ENCODE measurements at regions of chr15 and their contacts with region 1.

Region 1: DNA sequence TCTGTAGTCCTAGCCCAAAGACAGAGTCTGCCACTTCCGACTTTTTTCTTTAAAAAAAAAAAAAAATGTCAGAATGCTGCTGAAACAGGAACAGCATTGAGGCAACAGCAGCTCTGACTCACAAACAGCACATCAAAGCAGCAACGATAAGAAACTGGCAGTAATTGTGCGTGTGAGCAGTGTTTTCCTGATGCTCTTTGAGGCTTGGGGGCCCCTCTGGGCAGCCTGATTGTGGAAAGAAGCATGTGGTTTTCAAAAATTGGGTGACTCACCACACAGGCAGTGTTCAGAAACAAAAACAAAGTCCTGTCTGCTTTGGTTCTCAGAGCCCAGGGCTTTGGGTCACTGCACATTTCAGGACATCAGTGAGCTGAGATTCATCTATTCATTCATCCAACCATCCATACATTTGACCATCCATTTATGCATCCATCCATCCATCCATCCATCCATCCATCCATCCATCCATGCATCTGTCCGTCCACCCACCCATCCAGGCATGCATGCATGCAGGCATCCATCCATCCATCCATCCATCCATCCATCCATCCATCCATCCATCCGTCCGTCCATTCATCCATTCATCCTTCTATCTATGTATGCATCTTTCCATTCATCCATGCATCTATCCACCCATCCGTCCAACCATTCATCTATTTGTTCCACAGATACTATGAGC is 308.4 kb downstream of the RPLP1 start:
- DNase-seq: peak; percentile 51 to 95 (median 82)
- ATAC-seq: peak; percentile 69
- H3K4me3 ChIP-seq: no peak overlapping the region
- H3K4me3 Mint-ChIP-seq: peak overlapping the region; percentile 53
- H3K27ac ChIP-seq: peak overlapping the region in 1 of 2 experiments; percentile 17
- H3K27ac Mint-ChIP-seq: peak overlapping the region; percentile 87
- H3K4me1 ChIP-seq: peaks cover 60% of the 10 kb centered on the region
- H3K4me1 Mint-ChIP-seq: peaks cover 69% of the 10 kb centered on the region
- H3K27me3 ChIP-seq: no peaks in the 10 kb centered on the region
- H3K27me3 Mint-ChIP-seq: no peaks in the 10 kb centered on the region
- CTCF ChIP-seq: no peak

Region 2: GRCh38 chr15:69346112-69346511 is 414.9 kb before region 1 on chr15:
- CTCF ChIA-PET with region 1: no interaction called
- POLR2A ChIA-PET with region 1: no interaction called
- intact Hi-C with region 1: no loop called
- DNase-seq: no peak
- ATAC-seq: no peak
- H3K4me3 ChIP-seq: no peak overlapping the region
- H3K4me3 Mint-ChIP-seq: no peak overlapping the region
- H3K27ac ChIP-seq: no peak overlapping the region
- H3K27ac Mint-ChIP-seq: no peak overlapping the region
- H3K4me1 ChIP-seq: no peaks in the 10 kb centered on the region
- H3K4me1 Mint-ChIP-seq: no peaks in the 10 kb centered on the region
- H3K27me3 ChIP-seq: no peaks in the 10 kb centered on the region
- H3K27me3 Mint-ChIP-seq: peaks cover 3% of the 10 kb centered on the region
- CTCF ChIP-seq: no peak

Region 3: GRCh38 chr15:69713726-69714559 is 47.1 kb before region 1 on chr15:
- CTCF ChIA-PET with region 1: interaction called, 3 read pairs
- POLR2A ChIA-PET with region 1: interaction called, 5 read pairs
- intact Hi-C with region 1: loop called (anchors 1 kb)
- DNase-seq: peak; percentile 34 to 95 (median 77)
- ATAC-seq: peak; percentile 89
- H3K4me3 ChIP-seq: no peak overlapping the region
- H3K4me3 Mint-ChIP-seq: peak overlapping the region; percentile 20
- H3K27ac ChIP-seq: peak overlapping the region in 1 of 2 experiments; percentile 68
- H3K27ac Mint-ChIP-seq: peak overlapping the region; percentile 89
- H3K4me1 ChIP-seq: peaks cover 47% of the 10 kb centered on the region
- H3K4me1 Mint-ChIP-seq: peaks cover 66% of the 10 kb centered on the region
- H3K27me3 ChIP-seq: no peaks in the 10 kb centered on the region
- H3K27me3 Mint-ChIP-seq: no peaks in the 10 kb centered on the region
- CTCF ChIP-seq: no peak

Region 4: GRCh38 chr15:69719527-69720240 is 41.3 kb before region 1 on chr15:
- CTCF ChIA-PET with region 1: interaction called, 4 read pairs
- POLR2A ChIA-PET with region 1: interaction called, 8 read pairs
- intact Hi-C with region 1: loop called (anchors 1 kb)
- DNase-seq: peak; percentile 50 to 94 (median 72)
- ATAC-seq: peak; percentile 82
- H3K4me3 ChIP-seq: no peak overlapping the region
- H3K4me3 Mint-ChIP-seq: peak overlapping the region; percentile 36
- H3K27ac ChIP-seq: peak overlapping the region; percentile 50 to 78
- H3K27ac Mint-ChIP-seq: peak overlapping the region; percentile 87
- H3K4me1 ChIP-seq: peaks cover 75% of the 10 kb centered on the region
- H3K4me1 Mint-ChIP-seq: peaks cover 91% of the 10 kb centered on the region
- H3K27me3 ChIP-seq: no peaks in the 10 kb centered on the region
- H3K27me3 Mint-ChIP-seq: no peaks in the 10 kb centered on the region
- CTCF ChIP-seq: no peak

Region 5: GRCh38 chr15:69729161-69729748 is 31.8 kb before region 1 on chr15:
- CTCF ChIA-PET with region 1: interaction called, 6 read pairs
- POLR2A ChIA-PET with region 1: interaction called, 8 read pairs
- intact Hi-C with region 1: loop called in 1 of 2 experiments (anchors 1 kb)
- DNase-seq: peak; percentile 56 to 86 (median 79)
- ATAC-seq: peak; percentile 62
- H3K4me3 ChIP-seq: no peak overlapping the region
- H3K4me3 Mint-ChIP-seq: no peak overlapping the region
- H3K27ac ChIP-seq: no peak overlapping the region
- H3K27ac Mint-ChIP-seq: no peak overlapping the region
- H3K4me1 ChIP-seq: peaks cover 12% of the 10 kb centered on the region
- H3K4me1 Mint-ChIP-seq: peaks cover 20% of the 10 kb centered on the region
- H3K27me3 ChIP-seq: peaks cover 0 to 4% of the 10 kb centered on the region in 2 experiments
- H3K27me3 Mint-ChIP-seq: no peaks in the 10 kb centered on the region
- CTCF ChIP-seq: peak; percentile 81

Region 6: GRCh38 chr15:69777356-69777755 is 16.3 kb after region 1 on chr15:
- CTCF ChIA-PET with region 1: no interaction called
- POLR2A ChIA-PET with region 1: interaction called, 3 read pairs
- intact Hi-C with region 1: loop called in 1 of 2 experiments (anchors 2 kb)
- DNase-seq: no peak
- ATAC-seq: no peak
- H3K4me3 ChIP-seq: no peak overlapping the region
- H3K4me3 Mint-ChIP-seq: no peak overlapping the region
- H3K27ac ChIP-seq: no peak overlapping the region
- H3K27ac Mint-ChIP-seq: no peak overlapping the region
- H3K4me1 ChIP-seq: peaks cover 11% of the 10 kb centered on the region
- H3K4me1 Mint-ChIP-seq: peaks cover 13% of the 10 kb centered on the region
- H3K27me3 ChIP-seq: no peaks in the 10 kb centered on the region
- H3K27me3 Mint-ChIP-seq: peaks cover 2% of the 10 kb centered on the region
- CTCF ChIP-seq: no peak

Region 7: DNA sequence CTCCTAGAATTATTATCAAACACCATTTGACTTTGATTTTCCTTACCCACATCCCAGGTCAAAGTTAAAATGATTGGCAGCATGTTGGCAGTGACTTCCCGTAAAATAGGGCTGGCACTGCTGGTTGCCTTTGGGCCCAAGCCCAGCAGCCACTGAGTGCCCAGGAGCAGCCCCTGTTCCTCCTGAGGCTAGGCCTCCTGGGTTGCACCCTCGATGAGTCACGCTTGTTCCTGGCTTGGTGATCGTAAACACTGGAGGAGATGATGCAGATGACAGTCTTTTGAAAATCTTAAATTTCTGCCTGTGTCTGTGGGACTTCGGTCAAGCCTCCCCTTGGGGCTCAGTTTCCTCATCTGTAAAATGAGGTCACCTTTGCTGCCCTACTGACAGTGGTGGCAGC is 46.7 kb after region 1 on chr15:
- CTCF ChIA-PET with region 1: no interaction called
- POLR2A ChIA-PET with region 1: interaction called, 3 read pairs
- intact Hi-C with region 1: loop called in 1 of 2 experiments (anchors 1 kb)
- DNase-seq: no peak
- ATAC-seq: no peak
- H3K4me3 ChIP-seq: no peak overlapping the region
- H3K4me3 Mint-ChIP-seq: no peak overlapping the region
- H3K27ac ChIP-seq: no peak overlapping the region
- H3K27ac Mint-ChIP-seq: no peak overlapping the region
- H3K4me1 ChIP-seq: peaks cover 8% of the 10 kb centered on the region
- H3K4me1 Mint-ChIP-seq: peaks cover 12% of the 10 kb centered on the region
- H3K27me3 ChIP-seq: no peaks in the 10 kb centered on the region
- H3K27me3 Mint-ChIP-seq: peaks cover 16% of the 10 kb centered on the region
- CTCF ChIP-seq: no peak

Region 8: GRCh38 chr15:69868756-69869155 is 107.7 kb after region 1 on chr15:
- CTCF ChIA-PET with region 1: no interaction called
- POLR2A ChIA-PET with region 1: no interaction called
- intact Hi-C with region 1: no loop called
- DNase-seq: no peak
- ATAC-seq: no peak
- H3K4me3 ChIP-seq: no peak overlapping the region
- H3K4me3 Mint-ChIP-seq: no peak overlapping the region
- H3K27ac ChIP-seq: no peak overlapping the region
- H3K27ac Mint-ChIP-seq: no peak overlapping the region
- H3K4me1 ChIP-seq: no peaks in the 10 kb centered on the region
- H3K4me1 Mint-ChIP-seq: no peaks in the 10 kb centered on the region
- H3K27me3 ChIP-seq: no peaks in the 10 kb centered on the region
- H3K27me3 Mint-ChIP-seq: no peaks in the 10 kb centered on the region
- CTCF ChIP-seq: no peak

Region 9: DNA sequence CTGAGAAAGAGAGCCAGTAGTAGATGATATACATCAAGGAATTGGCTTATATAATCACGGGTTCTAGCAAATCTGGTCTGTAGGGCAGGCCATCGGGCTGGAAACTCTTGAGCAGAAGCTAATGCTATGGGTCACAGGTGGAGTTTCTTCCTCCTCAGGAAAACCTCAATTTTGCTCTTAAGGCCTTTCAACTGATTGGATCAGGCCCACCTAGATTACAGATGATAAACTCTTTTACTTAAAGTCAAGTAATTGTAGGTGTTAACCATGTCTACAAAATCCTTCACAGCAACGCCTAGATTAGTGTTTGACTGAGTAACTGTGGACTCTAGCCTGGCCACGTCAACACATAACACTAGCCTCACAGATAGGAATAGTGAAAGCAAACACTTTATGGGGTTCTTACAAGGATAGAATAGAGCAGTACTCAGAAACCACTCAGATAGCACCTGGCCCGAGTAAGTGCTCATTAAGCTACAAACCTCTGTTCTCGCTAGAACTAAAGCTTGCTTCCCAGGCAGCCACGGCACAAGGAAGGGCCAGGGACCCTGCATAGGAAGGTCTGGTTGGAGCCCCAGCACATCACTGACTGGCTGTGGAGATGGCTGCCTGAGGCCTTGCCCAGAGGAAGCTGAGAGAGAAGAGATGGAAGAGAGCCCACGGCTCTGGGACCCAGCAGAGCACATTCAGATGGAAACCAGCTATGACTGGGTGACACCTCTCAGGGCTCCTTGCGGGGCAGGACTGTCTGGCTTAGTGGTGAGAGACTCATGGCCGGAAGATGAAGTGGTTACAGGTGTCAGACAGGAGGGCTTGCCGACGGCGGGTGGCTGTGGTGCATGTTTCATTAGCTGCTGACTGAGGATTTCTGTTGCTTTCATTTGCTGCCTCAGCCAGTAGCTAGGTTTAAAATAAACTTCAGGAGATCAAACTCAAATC is 539.2 kb after region 1 on chr15:
- CTCF ChIA-PET with region 1: no interaction called
- POLR2A ChIA-PET with region 1: no interaction called
- intact Hi-C with region 1: loop called (anchors 1 to 2 kb)
- DNase-seq: peak; percentile 54 to 92 (median 71)
- ATAC-seq: peak; percentile 90
- H3K4me3 ChIP-seq: no peak overlapping the region
- H3K4me3 Mint-ChIP-seq: peak overlapping the region; percentile 44
- H3K27ac ChIP-seq: no peak overlapping the region
- H3K27ac Mint-ChIP-seq: peak overlapping the region; percentile 86
- H3K4me1 ChIP-seq: peaks cover 20% of the 10 kb centered on the region
- H3K4me1 Mint-ChIP-seq: peaks cover 18% of the 10 kb centered on the region
- H3K27me3 ChIP-seq: peaks cover 0 to 22% of the 10 kb centered on the region in 2 experiments
- H3K27me3 Mint-ChIP-seq: no peaks in the 10 kb centered on the region
- CTCF ChIP-seq: no peak

Measured in CD8-positive, alpha-beta T cell (primary cell).